Activated B cell treated with CpG ODN at 0.5 μM for 24 hours (primary cell): ENCODE measurements at regions of chr9 and their contacts with region 1.

Region 1: DNA sequence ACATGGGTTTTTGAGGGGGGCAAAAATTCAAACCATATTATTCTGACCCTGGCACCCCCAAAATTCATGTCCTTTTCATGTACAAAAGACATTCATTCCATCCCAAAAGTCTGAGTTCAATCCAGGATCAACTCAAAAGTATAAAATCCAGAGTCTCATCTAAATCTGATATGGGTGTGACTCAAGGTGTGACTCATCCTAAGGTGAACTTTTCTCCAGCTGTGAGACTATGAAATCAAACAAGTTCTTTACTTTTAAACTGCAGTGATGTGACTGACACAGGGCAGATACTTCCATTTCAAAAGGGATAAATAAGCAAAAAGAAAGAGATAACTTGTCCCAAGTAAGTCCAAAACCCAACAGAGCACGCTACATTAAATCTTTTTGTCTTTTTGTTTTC is 20.6 kb upstream of the CYLC2 start:
- DNase-seq: no peak
- ATAC-seq: no peak
- H3K4me3 Mint-ChIP-seq: no peak overlapping the region
- H3K27ac Mint-ChIP-seq: no peak overlapping the region
- H3K4me1 Mint-ChIP-seq: no peaks in the 10 kb centered on the region
- H3K27me3 Mint-ChIP-seq: no peaks in the 10 kb centered on the region
- CTCF ChIP-seq: no peak

Region 2: DNA sequence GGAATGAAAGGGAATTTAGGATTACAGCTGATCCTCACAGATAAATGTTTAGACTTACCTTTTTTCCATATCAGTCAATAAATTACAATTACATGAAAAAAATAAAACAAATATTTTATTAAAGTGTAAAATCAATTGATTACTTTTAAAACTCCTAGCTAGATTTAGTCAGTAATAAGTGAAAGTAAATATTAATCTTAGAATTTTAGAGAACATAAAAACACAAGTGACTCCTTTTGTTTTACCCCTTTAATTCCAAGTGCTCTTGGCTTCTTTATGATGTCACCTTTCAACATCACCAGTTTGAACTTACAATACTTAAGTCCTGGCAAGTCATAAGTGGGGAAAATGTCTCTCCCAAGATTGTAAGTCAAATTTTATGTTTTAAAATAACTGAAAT is 20.5 kb after region 1 on chr9 and contains the start of gene CYLC2:
- CTCF ChIA-PET with region 1: no interaction called
- POLR2A ChIA-PET with region 1: no interaction called
- intact Hi-C with region 1: loop called (anchors 2 kb)
- DNase-seq: no peak
- ATAC-seq: no peak
- H3K4me3 Mint-ChIP-seq: no peak within 1 kb of the TSS
- H3K27ac Mint-ChIP-seq: no peak within 1 kb of the TSS
- H3K4me1 Mint-ChIP-seq: no peaks in the 10 kb centered on the region
- H3K27me3 Mint-ChIP-seq: no peaks in the 10 kb centered on the region
- CTCF ChIP-seq: no peak
- total RNA-seq, gene CYLC2: not detected in 2 replicates